CD8-positive, alpha-beta memory T cell (primary cell): ENCODE measurements at regions of chr1 and their contacts with region 1.

Region 1: DNA sequence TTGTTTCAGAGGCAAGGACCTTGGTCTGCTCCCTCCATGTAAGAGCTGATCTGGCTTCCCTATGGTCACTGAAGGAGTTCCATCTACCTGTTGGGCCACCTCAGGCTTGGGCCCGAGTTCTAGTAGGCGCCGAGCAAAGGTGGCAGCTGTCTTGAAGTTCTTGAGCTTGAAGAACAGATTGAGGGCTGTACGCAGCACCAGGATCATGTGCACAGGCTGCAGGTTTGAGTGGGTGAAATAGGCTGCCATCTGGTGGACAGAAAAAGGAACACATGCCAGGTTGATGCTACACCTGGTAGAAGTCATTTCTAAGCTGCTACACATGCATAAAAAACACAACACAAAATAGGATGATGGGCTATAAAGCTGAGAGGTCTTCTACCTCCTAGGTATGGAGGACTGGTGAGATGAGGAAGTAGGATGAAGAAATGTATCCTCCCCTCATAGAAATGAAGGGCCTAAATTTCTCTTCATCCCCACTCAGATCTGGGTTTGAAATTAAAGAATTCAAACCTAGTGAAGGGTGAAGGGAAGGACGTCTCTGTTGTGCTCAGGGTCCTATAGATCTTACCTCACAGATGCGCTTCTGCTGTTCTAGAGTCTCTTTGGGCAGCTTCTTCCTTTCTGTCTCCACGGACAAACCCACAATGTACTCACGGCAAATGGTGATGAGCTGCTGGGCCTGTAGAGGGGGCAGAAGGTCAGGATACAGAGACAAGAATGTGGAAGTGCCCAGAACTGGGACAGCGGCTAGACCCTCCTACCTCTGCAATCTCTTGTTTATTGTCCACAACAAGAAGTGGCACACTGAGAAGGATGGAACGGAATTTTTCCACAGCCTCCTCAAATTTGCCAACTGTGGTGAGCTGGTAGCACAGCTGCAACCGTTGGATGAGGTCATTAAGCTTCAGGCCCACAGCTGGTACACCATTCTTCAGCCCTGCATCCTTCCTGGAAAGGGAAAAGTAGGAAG is 6.6 kb upstream of the PEX19 start:
- DNase-seq: peak; percentile 41 to 79 (median 66)
- H3K4me3 ChIP-seq: no peak overlapping the region
- H3K4me3 Mint-ChIP-seq: peak overlapping the region in 1 of 7 donors; percentile 32
- H3K27ac ChIP-seq: no peak overlapping the region
- H3K27ac Mint-ChIP-seq: peak overlapping the region; percentile 36 to 86 (median 64)
- H3K4me1 ChIP-seq: peaks cover 5% of the 10 kb centered on the region
- H3K4me1 Mint-ChIP-seq: peaks cover 0 to 6% (median 3%) of the 10 kb centered on the region in 3 donors
- H3K27me3 ChIP-seq: no peaks in the 10 kb centered on the region
- H3K27me3 Mint-ChIP-seq: no peaks in the 10 kb centered on the region

Region 2: GRCh38 chr1:160098852-160099561 is 192.5 kb before region 1 on chr1:
- CTCF ChIA-PET with region 1: interaction called, 71 read pairs
- POLR2A ChIA-PET with region 1: interaction called, 5 read pairs
- DNase-seq: peak; percentile 94 to 99 (median 97)
- H3K4me3 ChIP-seq: peak overlapping the region; percentile 63
- H3K4me3 Mint-ChIP-seq: peak overlapping the region; percentile 76 to 91 (median 81)
- H3K27ac ChIP-seq: peak overlapping the region; percentile 79
- H3K27ac Mint-ChIP-seq: peak overlapping the region; percentile 79 to 99 (median 96)
- H3K4me1 ChIP-seq: peaks cover 54% of the 10 kb centered on the region
- H3K4me1 Mint-ChIP-seq: peaks cover 49 to 82% (median 52%) of the 10 kb centered on the region in 3 donors
- H3K27me3 ChIP-seq: no peaks in the 10 kb centered on the region
- H3K27me3 Mint-ChIP-seq: peaks cover 0 to 2% of the 10 kb centered on the region in 2 donors

Region 3: DNA sequence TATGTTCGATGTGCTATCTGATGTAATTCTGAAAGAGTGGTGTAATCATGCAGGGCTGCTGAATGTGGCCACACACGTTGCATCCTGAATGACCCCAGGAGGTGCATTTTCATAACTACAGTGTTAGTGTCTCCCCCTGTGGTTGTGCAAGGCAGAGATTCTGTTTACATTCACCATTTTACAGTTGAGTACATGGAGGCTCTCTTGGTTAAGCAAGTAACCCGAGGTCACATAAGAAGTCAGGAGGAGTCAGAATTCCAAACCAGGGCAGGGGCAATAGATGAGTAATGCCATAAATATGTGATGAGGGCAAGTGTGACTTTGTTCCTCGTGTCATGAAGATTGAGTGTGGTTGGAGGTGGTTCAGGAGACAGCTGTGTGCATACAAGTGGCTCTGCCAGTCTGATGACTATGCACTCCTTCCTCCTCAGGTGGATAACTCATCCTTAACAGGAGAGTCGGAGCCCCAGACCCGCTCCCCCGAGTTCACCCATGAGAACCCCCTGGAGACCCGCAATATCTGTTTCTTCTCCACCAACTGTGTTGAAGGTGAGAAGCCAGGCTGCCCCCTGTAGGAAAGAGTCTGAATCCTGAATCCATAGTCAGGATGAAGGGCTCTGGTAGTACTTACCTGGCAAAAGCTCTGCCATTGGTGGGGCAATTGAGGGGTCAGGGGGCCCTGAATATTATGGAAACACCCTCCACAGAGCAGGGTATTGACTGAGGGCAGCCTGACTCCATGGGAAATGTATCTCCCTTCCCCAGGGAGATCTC is 166.6 kb before region 1 on chr1:
- CTCF ChIA-PET with region 1: no interaction called
- POLR2A ChIA-PET with region 1: no interaction called
- DNase-seq: no peak
- H3K4me3 ChIP-seq: no peak overlapping the region
- H3K4me3 Mint-ChIP-seq: no peak overlapping the region
- H3K27ac ChIP-seq: no peak overlapping the region
- H3K27ac Mint-ChIP-seq: no peak overlapping the region
- H3K4me1 ChIP-seq: no peaks in the 10 kb centered on the region
- H3K4me1 Mint-ChIP-seq: no peaks in the 10 kb centered on the region
- H3K27me3 ChIP-seq: no peaks in the 10 kb centered on the region
- H3K27me3 Mint-ChIP-seq: peaks cover 2 to 13% of the 10 kb centered on the region in 2 donors

Region 4: DNA sequence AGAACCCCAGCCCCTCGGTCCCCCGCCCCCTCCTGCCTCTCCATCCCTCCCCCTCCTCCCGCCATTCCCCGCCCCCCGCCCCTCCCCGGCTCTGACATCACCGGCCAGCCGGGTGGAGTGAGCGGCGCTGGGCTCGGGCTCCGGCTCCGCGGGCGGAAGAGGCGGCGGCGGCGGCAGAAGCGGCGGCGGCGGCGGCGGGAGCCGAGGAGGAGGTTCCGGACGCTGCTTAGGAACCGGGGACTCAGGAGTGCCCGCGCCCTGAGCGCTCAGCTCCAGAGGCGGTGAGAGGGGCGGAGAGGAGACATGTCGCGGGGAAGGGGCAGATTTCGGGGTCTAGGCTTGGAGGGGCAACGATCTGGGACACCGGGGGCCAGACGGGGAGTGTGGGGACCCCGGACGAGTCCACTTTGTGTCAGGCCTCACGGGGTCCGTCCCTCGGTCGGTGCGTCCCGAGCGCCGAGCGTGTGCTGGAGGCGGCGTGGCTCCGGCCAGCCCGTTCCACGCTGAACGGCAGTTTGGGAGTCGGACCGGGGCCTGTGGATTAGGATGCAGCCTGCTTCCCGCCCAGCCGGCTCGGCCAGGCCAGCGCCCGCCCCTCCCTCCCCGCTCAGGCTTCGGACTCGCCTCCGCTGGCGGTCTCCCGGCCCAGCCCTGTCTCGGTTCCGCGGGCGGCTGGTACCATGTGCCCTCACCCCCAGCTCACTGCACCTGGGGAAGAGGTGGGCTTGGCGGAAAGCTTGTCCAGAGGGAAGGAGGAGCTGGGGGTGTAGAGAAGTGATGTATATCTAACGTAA is 86.1 kb before region 1 on chr1 and contains the start of gene PEA15:
- CTCF ChIA-PET with region 1: interaction called, 12 read pairs
- POLR2A ChIA-PET with region 1: no interaction called
- DNase-seq: peak; percentile 56 to 76 (median 58)
- H3K4me3 ChIP-seq: peak within 1 kb of the TSS; percentile 71
- H3K4me3 Mint-ChIP-seq: peak within 1 kb of the TSS; percentile 86 to 95 (median 88)
- H3K27ac ChIP-seq: peak within 1 kb of the TSS; percentile 69
- H3K27ac Mint-ChIP-seq: peak within 1 kb of the TSS; percentile 88 to 98 (median 94)
- H3K4me1 ChIP-seq: peaks cover 13% of the 10 kb centered on the region
- H3K4me1 Mint-ChIP-seq: peaks cover 42 to 50% (median 49%) of the 10 kb centered on the region in 3 donors
- H3K27me3 ChIP-seq: no peaks in the 10 kb centered on the region
- H3K27me3 Mint-ChIP-seq: no peaks in the 10 kb centered on the region
- total RNA-seq, gene PEA15: 77.4 to 81.4 TPM

Region 5: DNA sequence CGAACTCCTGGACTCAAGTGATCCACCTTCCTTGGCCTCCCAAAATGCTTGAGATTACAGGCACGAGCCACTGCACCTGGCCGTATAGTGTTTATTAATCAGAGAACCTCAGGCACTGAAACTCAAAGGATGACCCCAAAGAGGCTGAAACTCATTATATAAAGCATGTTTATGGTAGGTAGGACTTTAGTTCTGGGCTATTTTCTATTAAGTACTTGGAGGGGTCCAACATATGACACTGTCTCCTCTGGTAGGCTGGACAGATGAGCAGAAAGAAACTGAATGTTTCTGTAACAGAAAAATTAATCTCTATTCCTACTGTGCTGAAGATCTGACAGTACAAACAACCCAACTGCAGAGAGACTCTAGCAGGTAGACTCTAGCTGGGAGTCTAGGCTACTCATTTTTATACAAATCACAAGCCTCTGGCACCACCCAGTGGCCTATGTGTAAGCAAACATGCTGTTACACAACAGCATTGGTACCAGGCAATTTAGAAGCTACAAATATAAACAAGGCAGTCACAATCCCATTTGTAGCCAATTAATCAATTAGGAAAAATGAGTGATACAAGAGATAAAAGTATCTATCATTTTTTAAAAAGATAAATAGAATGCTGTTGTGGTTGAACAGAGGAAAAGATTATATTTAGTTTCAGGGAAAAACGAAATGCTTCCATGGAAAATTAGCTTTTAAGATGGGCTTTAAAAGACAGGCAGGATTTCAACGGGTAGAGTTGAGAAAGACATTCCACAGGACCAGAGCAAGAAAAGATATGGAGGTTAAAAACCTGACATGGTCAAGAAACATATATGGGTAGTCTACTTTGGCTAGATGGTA is 39.6 kb before region 1 on chr1:
- CTCF ChIA-PET with region 1: interaction called, 28 read pairs
- POLR2A ChIA-PET with region 1: no interaction called
- DNase-seq: peak; percentile 30 to 72 (median 43)
- H3K4me3 ChIP-seq: no peak overlapping the region
- H3K4me3 Mint-ChIP-seq: no peak overlapping the region
- H3K27ac ChIP-seq: no peak overlapping the region
- H3K27ac Mint-ChIP-seq: peak overlapping the region; percentile 8 to 87 (median 74)
- H3K4me1 ChIP-seq: peaks cover 5% of the 10 kb centered on the region
- H3K4me1 Mint-ChIP-seq: peaks cover 15 to 41% (median 29%) of the 10 kb centered on the region in 3 donors
- H3K27me3 ChIP-seq: no peaks in the 10 kb centered on the region
- H3K27me3 Mint-ChIP-seq: no peaks in the 10 kb centered on the region

Region 6: GRCh38 chr1:160277330-160277729 is 14.2 kb before region 1 on chr1:
- CTCF ChIA-PET with region 1: interaction called, 25 read pairs
- POLR2A ChIA-PET with region 1: no interaction called
- DNase-seq: no peak
- H3K4me3 ChIP-seq: no peak overlapping the region
- H3K4me3 Mint-ChIP-seq: no peak overlapping the region
- H3K27ac ChIP-seq: no peak overlapping the region
- H3K27ac Mint-ChIP-seq: no peak overlapping the region
- H3K4me1 ChIP-seq: no peaks in the 10 kb centered on the region
- H3K4me1 Mint-ChIP-seq: peaks cover 0 to 6% (median 0%) of the 10 kb centered on the region in 3 donors
- H3K27me3 ChIP-seq: no peaks in the 10 kb centered on the region
- H3K27me3 Mint-ChIP-seq: no peaks in the 10 kb centered on the region

Region 7: GRCh38 chr1:160460683-160461287 is 169.3 kb after region 1 on chr1:
- CTCF ChIA-PET with region 1: no interaction called
- POLR2A ChIA-PET with region 1: no interaction called
- DNase-seq: no peak
- H3K4me3 ChIP-seq: no peak overlapping the region
- H3K4me3 Mint-ChIP-seq: peak overlapping the region in 6 of 7 donors; percentile 24 to 80 (median 77)
- H3K27ac ChIP-seq: no peak overlapping the region
- H3K27ac Mint-ChIP-seq: peak overlapping the region; percentile 12 to 91 (median 65)
- H3K4me1 ChIP-seq: peaks cover 15% of the 10 kb centered on the region
- H3K4me1 Mint-ChIP-seq: peaks cover 45 to 72% (median 63%) of the 10 kb centered on the region in 3 donors
- H3K27me3 ChIP-seq: no peaks in the 10 kb centered on the region
- H3K27me3 Mint-ChIP-seq: peaks cover 0 to 2% of the 10 kb centered on the region in 2 donors